ENCODE measurements at regions of chr4 and their contacts with region 1.

Region 1: GRCh38 chr4:76305971-76306881 is at the start of gene STBD1:
- DNase-seq: peak; percentile 47 to 90
- H3K4me3 ChIP-seq: peak within 1 kb of the TSS; percentile 60 to 81 (median 72)
- H3K27ac ChIP-seq: no peak within 1 kb of the TSS
- H3K4me1 ChIP-seq: no peaks in the 10 kb centered on the region; a peak in 1 of 7 replicates
- H3K27me3 ChIP-seq: peaks cover 2 to 17% (median 11%) of the 10 kb centered on the region in 4 experiments
- CTCF ChIP-seq: no peak
- EP300 ChIP-seq: no peak
- POLR2A ChIP-seq: peak in 1 of 2 experiments; percentile 34; a peak in 1 of 3 replicates
- RAD21 ChIP-seq: no peak
- total RNA-seq, gene STBD1: 1.4 and 1.7 TPM in 2 replicates

Region 2: DNA sequence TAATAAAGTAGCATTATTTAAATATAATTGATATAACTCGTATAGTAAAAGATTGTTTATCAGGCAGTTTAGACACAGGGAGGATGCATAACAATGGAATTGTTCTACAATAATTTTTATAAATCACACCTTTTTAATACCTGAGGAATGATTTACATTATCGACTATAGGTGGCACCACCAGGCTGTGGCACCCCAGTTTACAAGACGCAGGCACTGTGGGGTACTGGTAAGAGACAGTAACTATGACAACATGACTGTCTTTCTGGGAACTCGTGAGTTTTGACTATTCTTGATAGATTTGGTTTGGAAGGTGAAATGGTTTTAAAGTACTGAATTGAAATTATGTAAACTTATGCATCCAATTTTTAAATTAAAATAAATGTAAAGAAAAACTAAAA is 26.8 kb before region 1 on chr4:
- CTCF ChIA-PET with region 1: interaction called, 14 read pairs
- POLR2A ChIA-PET with region 1: no interaction called
- DNase-seq: no peak
- H3K4me3 ChIP-seq: no peak overlapping the region
- H3K27ac ChIP-seq: no peak overlapping the region
- H3K4me1 ChIP-seq: no peaks in the 10 kb centered on the region; a peak in 1 of 7 replicates
- H3K27me3 ChIP-seq: peaks cover 0 to 1% (median 0%) of the 10 kb centered on the region in 4 experiments; a peak in 1 of 7 replicates
- CTCF ChIP-seq: peak in 2 of 3 experiments; percentile 6 to 13; a peak in 1 of 4 replicates
- EP300 ChIP-seq: no peak
- POLR2A ChIP-seq: no peak
- RAD21 ChIP-seq: peak; percentile 40 to 57

Region 3: GRCh38 chr4:76293772-76294171 is 12.5 kb before region 1 on chr4:
- CTCF ChIA-PET with region 1: interaction called, 21 read pairs
- POLR2A ChIA-PET with region 1: interaction called, 6 read pairs
- DNase-seq: no peak
- H3K4me3 ChIP-seq: no peak overlapping the region
- H3K27ac ChIP-seq: no peak overlapping the region
- H3K4me1 ChIP-seq: no peaks in the 10 kb centered on the region
- H3K27me3 ChIP-seq: no peaks in the 10 kb centered on the region
- CTCF ChIP-seq: no peak
- EP300 ChIP-seq: no peak
- POLR2A ChIP-seq: no peak
- RAD21 ChIP-seq: no peak

Region 4: GRCh38 chr4:76341063-76341462 is 34.8 kb after region 1 on chr4:
- CTCF ChIA-PET with region 1: no interaction called
- POLR2A ChIA-PET with region 1: no interaction called
- DNase-seq: no peak
- H3K4me3 ChIP-seq: no peak overlapping the region
- H3K27ac ChIP-seq: no peak overlapping the region
- H3K4me1 ChIP-seq: no peaks in the 10 kb centered on the region
- H3K27me3 ChIP-seq: no peaks in the 10 kb centered on the region
- CTCF ChIP-seq: no peak
- EP300 ChIP-seq: no peak
- POLR2A ChIP-seq: no peak
- RAD21 ChIP-seq: no peak